Mucosa of descending colon (tissue), 3 donors: ENCODE measurements at regions of chr5 and their contacts with region 1.

Region 1: DNA sequence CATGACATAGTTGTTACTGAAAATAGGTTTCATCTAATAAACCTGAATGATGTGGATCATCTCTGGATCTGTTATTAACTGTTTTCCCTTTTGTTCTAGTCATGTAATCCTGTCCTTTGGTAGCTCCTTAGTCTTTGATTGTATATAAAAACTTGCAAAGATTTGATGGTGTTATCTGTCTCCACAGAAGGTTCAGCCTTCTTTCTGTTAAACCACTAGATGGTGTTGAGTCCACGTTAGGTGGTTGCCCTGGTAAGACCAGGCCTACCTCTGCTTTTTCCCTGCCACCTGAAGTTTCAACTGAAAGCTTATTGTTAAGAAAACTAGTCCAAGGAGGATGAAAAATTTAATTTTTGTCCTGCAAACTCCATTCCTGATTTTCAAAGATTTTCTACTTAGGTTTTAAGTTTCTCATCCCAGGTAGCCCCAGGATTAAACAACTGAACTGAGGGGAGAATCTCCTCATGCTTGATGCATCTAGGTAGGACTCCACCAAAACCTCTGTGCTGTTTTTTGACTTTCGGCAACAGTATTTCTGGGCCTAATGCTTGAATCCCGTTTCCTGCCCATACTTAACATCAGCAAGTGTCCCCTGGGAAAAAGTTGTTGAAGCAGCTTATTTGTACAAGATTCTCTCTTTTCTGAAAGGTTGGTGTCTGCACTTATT is 68.5 kb downstream of the RICTOR start:
- DNase-seq: no peak
- ATAC-seq: peak; percentile 43
- H3K4me3 ChIP-seq: no peak overlapping the region
- H3K4me1 ChIP-seq: no peaks in the 10 kb centered on the region
- CTCF ChIP-seq: no peak

Region 2: DNA sequence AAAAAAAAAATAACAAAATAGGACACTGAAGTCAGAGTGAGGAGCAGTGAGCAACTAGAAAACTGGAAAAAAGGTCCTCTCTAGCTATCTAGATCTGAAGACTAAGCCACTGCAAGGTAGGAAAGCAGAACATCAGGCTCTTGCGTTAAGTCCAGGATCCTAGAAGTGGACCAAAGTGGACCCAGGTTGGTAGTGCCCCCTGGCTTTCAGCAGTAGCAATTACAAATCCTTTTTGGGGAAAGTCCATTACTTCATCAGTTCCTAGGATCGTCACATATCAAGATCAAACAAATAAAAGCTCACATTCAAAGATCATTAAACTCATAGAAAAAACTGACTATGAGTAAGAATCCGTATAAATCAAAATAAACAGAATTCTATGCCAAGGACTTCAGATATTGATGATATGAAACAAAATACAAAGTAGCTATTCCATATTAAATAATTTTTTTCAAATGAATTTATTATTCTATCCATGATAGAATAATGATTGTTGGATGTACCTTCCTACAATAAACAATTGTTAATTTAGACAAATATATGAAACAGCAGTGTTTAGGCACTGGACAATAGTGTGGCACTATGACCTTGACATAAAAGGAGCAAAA is 75.0 kb after region 1 on chr5:
- intact Hi-C with region 1: loop called in 1 of 2 experiments (anchors 10 kb)
- DNase-seq: peak in 2 of 3 donors; percentile 30 to 40
- ATAC-seq: peak; percentile 89
- H3K4me3 ChIP-seq: no peak overlapping the region
- H3K4me1 ChIP-seq: no peaks in the 10 kb centered on the region
- CTCF ChIP-seq: peak; percentile 52